OCI-LY7 (cell line): ENCODE measurements at regions of chr22 and their contacts with region 1.

Region 1: GRCh38 chr22:31345331-31346254 is 553 bp downstream of the PATZ1 start:
- DNase-seq: peak; percentile 96
- H3K4me3 ChIP-seq: peak overlapping the region; percentile 84
- H3K27ac ChIP-seq: peak overlapping the region; percentile 76
- H3K4me1 ChIP-seq: peaks cover 30% of the 10 kb centered on the region
- CTCF ChIP-seq: peak; percentile 80

Region 2: GRCh38 chr22:31272522-31273446 is 72.8 kb before region 1 on chr22:
- CTCF ChIA-PET with region 1: no interaction called
- POLR2A ChIA-PET with region 1: no interaction called
- intact Hi-C with region 1: no loop called
- DNase-seq: peak; percentile 66
- H3K4me3 ChIP-seq: no peak overlapping the region
- H3K27ac ChIP-seq: no peak overlapping the region
- H3K4me1 ChIP-seq: no peaks in the 10 kb centered on the region
- CTCF ChIP-seq: peak; percentile 89

Region 3: GRCh38 chr22:31489604-31490495 is 144.3 kb after region 1 on chr22 and contains the start of gene EIF4ENIF1:
- CTCF ChIA-PET with region 1: no interaction called
- POLR2A ChIA-PET with region 1: no interaction called
- intact Hi-C with region 1: loop called (anchors 5 kb)
- DNase-seq: peak; percentile 87
- H3K4me3 ChIP-seq: peak within 1 kb of the TSS; percentile 79
- H3K27ac ChIP-seq: peak within 1 kb of the TSS; percentile 97
- H3K4me1 ChIP-seq: peaks cover 50% of the 10 kb centered on the region
- CTCF ChIP-seq: no peak
- total RNA-seq, gene EIF4ENIF1: 12.5 and 18.1 TPM in 2 replicates

Region 4: DNA sequence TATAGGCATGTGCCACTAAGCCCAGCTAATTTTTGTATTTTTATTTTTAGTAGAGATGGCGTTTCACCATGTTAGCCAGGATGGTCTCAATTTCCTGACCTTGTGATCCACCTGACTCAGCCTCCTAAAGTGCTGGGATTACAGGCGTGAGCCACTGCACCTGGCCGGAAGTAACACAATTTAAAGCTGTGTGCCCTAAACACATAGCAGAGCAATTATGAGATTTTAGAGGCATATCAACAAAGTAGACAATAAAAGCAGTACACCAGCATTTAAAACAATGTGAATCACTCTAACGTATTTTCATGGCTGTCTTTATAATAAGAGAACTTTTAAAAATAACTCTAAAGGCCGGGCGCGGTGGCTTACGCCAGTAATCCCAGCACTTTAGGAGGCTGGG is 361.9 kb after region 1 on chr22:
- CTCF ChIA-PET with region 1: no interaction called
- POLR2A ChIA-PET with region 1: no interaction called
- intact Hi-C with region 1: no loop called
- DNase-seq: peak; percentile 8
- H3K4me3 ChIP-seq: no peak overlapping the region
- H3K27ac ChIP-seq: no peak overlapping the region
- H3K4me1 ChIP-seq: peaks cover 13% of the 10 kb centered on the region
- CTCF ChIP-seq: no peak